Panc1 (cell line): ENCODE measurements at regions of chrX and their contacts with region 1.

Region 1: GRCh38 chrX:44744799-44745198 is 99.0 kb upstream of the DUSP21 start:
- DNase-seq: no peak
- ATAC-seq: no peak
- H3K4me3 ChIP-seq: no peak overlapping the region
- H3K27ac ChIP-seq: no peak overlapping the region
- H3K4me1 ChIP-seq: no peaks in the 10 kb centered on the region
- H3K27me3 ChIP-seq: no peaks in the 10 kb centered on the region
- CTCF ChIP-seq: no peak

Region 2: DNA sequence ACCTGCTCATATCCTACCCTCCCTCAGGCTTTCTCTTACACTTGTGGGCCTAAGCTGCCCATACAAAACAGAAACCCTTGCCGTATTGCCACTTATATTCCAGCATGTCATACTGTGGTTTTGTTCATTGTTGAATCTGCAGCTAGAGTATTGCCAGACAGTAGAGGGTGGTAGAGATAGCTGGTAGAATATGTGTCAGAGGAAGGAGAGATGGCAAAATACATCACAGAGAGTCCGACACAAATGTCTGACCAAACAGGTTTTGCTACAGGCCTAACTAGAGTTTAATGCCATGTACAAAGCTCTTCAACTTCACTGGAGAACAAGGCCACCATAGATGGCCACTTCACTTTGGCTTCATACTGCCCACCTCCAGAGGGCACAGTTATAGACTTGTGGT is 561.5 kb before region 1 on chrX:
- CTCF ChIA-PET with region 1: no interaction called
- POLR2A ChIA-PET with region 1: interaction called, 10 read pairs
- in situ Hi-C with region 1: no loop called
- intact Hi-C with region 1: no loop called
- DNase-seq: no peak
- ATAC-seq: no peak
- H3K4me3 ChIP-seq: no peak overlapping the region
- H3K27ac ChIP-seq: no peak overlapping the region
- H3K4me1 ChIP-seq: no peaks in the 10 kb centered on the region
- H3K27me3 ChIP-seq: no peaks in the 10 kb centered on the region
- CTCF ChIP-seq: peak; percentile 15